ENCODE measurements at regions of chr10 and their contacts with region 1.

Region 1: DNA sequence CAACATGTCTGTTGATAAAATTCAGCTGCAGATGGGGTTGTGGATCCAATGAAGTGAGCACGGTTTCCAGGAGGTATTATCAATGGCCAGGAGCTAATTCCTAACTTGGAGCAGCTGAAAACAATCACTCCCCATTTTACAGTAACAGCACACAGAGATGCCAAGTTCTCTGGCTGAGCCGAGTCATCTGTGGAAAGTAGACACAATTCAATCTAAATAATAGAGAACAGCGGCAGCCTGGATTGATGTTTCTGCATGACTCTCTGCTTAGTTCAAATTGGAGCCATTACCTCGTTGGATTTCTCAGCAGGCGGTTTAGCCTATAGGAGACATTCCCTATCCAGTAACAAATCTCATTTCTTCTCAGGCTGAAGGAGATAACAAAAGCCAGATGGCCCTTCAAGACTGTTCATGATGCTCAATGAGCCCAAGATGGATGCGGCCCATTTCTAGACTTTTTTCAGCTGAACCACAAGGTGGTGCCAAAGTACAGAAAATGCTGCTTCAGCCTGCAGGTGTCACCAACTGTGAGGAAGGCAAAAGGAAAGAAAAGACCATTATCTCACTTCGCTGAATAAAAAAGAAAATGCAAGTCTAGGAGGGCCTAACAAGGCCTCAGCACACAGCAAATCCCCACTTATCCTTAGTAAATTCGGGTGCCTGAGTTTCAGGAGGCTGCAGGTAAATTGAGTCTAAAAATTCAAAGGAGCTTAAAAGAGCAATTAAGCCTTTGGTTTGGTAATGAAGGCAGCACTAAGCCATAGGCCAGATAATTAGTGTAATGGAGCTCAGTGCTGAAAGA is 83.7 kb downstream of the SLC16A9 start:
- DNase-seq: peak; percentile 66
- H3K4me3 Mint-ChIP-seq: no peak overlapping the region
- H3K27ac Mint-ChIP-seq: no peak overlapping the region
- H3K4me1 Mint-ChIP-seq: peaks cover 5% of the 10 kb centered on the region
- H3K27me3 Mint-ChIP-seq: peaks cover 4% of the 10 kb centered on the region
- CTCF ChIP-seq: peak; percentile 81

Region 2: DNA sequence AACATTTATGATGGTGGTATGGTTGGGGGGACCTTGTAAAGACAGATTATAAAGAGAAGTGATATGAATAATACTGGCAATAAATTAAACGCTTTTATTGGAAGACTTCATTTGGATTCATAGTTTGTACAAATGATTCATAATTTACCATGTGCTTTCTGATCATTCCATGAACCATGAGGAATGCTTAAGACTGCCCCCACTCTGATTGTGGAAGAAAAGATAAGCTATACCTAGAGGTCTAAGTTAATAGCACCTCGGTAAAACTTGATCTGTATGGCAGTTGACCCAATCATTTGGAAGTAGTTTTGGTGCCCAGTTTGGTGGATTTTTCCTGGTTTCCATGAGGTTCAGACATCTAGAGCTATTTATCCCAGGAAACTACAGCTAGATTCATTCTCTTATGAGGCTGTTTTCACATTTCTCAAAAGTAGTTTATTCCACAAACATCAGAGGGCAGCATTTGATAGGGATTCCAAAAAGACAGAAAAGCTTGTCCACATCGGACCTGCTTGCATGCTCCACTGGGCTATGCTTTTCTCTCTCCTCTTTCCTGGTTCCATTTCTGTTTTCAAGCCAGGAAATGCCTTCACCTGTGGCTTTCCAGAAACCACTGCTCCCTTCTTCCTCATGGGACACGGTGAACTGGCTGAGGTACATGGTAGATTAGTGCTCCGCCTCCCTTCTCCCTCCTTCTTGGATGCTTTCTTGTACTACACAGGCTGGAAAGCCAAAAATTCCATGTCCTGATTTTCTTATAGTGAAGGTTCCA is 1211.5 kb before region 1 on chr10:
- CTCF ChIA-PET with region 1: no interaction called
- POLR2A ChIA-PET with region 1: no interaction called
- intact Hi-C with region 1: loop called (anchors 10 kb)
- DNase-seq: peak; percentile 79
- H3K4me3 Mint-ChIP-seq: no peak overlapping the region
- H3K27ac Mint-ChIP-seq: no peak overlapping the region
- H3K4me1 Mint-ChIP-seq: peaks cover 16% of the 10 kb centered on the region
- H3K27me3 Mint-ChIP-seq: no peaks in the 10 kb centered on the region
- CTCF ChIP-seq: peak; percentile 67

Region 3: GRCh38 chr10:58590152-58590840 is 1035.6 kb before region 1 on chr10:
- CTCF ChIA-PET with region 1: no interaction called
- POLR2A ChIA-PET with region 1: no interaction called
- intact Hi-C with region 1: no loop called
- DNase-seq: peak; percentile 87
- H3K4me3 Mint-ChIP-seq: peak overlapping the region; percentile 10
- H3K27ac Mint-ChIP-seq: peak overlapping the region; percentile 69
- H3K4me1 Mint-ChIP-seq: peaks cover 29% of the 10 kb centered on the region
- H3K27me3 Mint-ChIP-seq: no peaks in the 10 kb centered on the region
- CTCF ChIP-seq: no peak

Region 4: GRCh38 chr10:58952747-58953466 is 673.0 kb before region 1 on chr10:
- CTCF ChIA-PET with region 1: interaction called, 13 read pairs
- POLR2A ChIA-PET with region 1: no interaction called
- intact Hi-C with region 1: loop called (anchors 2 kb)
- DNase-seq: peak; percentile 59
- H3K4me3 Mint-ChIP-seq: no peak overlapping the region
- H3K27ac Mint-ChIP-seq: no peak overlapping the region
- H3K4me1 Mint-ChIP-seq: peaks cover 6% of the 10 kb centered on the region
- H3K27me3 Mint-ChIP-seq: peaks cover 9% of the 10 kb centered on the region
- CTCF ChIP-seq: peak; percentile 70

Region 5: DNA sequence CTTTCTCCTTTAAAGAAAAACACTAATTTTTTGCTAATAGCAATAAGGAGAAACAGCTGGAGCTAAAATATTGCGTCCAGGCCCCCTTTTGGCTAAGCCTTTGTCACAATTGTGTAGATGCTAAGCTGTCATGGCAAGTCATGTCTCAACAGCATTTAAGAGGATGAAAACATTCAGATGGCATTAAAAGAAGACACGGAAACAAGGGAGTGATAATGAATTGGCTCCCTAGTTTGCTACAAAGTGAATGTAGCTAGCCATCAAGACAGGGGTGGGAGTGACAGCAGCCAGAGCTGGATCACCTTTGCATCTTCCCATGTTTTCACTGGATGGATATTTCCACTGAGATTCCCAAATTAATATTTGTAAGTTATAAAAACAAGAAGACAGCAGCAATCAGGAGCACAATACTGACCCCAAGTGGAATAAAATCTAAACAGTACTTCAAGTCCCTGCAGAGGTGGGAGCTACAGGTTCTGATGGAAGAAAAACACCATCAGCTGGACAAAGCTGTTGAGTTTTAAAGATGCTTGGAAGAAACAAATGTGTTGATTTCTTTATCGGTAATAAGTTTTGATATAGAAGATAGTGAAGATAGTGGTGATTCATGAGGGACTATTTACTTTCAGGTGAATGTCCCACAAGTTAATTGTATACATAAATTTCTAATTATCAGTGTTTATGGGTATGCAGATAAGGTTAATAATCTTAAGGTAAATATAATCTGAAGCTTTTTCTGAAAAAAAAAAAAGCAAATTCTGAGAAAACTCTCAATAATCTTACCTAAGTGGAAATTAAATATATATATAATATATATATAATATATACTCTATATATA is 45.7 kb before region 1 on chr10:
- CTCF ChIA-PET with region 1: interaction called, 17 read pairs
- POLR2A ChIA-PET with region 1: no interaction called
- intact Hi-C with region 1: no loop called
- DNase-seq: peak; percentile 34
- H3K4me3 Mint-ChIP-seq: no peak overlapping the region
- H3K27ac Mint-ChIP-seq: no peak overlapping the region
- H3K4me1 Mint-ChIP-seq: no peaks in the 10 kb centered on the region
- H3K27me3 Mint-ChIP-seq: peaks cover 21% of the 10 kb centered on the region
- CTCF ChIP-seq: peak; percentile 22

Region 6: GRCh38 chr10:59817773-59818172 is 191.9 kb after region 1 on chr10:
- CTCF ChIA-PET with region 1: interaction called, 10 read pairs
- POLR2A ChIA-PET with region 1: no interaction called
- intact Hi-C with region 1: no loop called
- DNase-seq: no peak
- H3K4me3 Mint-ChIP-seq: no peak overlapping the region
- H3K27ac Mint-ChIP-seq: no peak overlapping the region
- H3K4me1 Mint-ChIP-seq: peaks cover 5% of the 10 kb centered on the region
- H3K27me3 Mint-ChIP-seq: no peaks in the 10 kb centered on the region
- CTCF ChIP-seq: no peak

Region 7: DNA sequence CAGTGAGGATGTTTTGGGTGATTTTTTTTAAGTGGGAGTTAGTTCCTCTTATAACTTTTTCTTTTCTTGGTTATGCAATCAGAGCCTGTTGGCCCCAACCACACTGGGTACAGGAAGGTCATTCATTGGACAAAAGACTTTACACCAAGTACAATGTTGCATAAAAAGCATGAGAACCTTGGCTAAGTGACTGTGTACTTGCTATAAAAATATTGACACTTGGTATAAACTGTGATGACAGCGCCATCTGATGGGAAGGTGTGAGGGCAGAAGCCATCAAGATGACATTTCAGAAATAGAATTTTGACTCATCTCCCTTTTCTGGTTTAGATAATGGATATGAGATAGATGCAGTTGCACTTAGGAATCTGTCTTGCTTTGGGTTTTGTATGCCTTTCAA is 406.8 kb after region 1 on chr10:
- CTCF ChIA-PET with region 1: interaction called, 9 read pairs
- POLR2A ChIA-PET with region 1: no interaction called
- intact Hi-C with region 1: loop called (anchors 1 kb)
- DNase-seq: peak; percentile 77
- H3K4me3 Mint-ChIP-seq: no peak overlapping the region
- H3K27ac Mint-ChIP-seq: no peak overlapping the region
- H3K4me1 Mint-ChIP-seq: no peaks in the 10 kb centered on the region
- H3K27me3 Mint-ChIP-seq: no peaks in the 10 kb centered on the region
- CTCF ChIP-seq: peak; percentile 58

Measured in MCF 10A (cell line).